IMR-90 (cell line): ENCODE measurements at regions of chr1 and their contacts with region 1.

Region 1: DNA sequence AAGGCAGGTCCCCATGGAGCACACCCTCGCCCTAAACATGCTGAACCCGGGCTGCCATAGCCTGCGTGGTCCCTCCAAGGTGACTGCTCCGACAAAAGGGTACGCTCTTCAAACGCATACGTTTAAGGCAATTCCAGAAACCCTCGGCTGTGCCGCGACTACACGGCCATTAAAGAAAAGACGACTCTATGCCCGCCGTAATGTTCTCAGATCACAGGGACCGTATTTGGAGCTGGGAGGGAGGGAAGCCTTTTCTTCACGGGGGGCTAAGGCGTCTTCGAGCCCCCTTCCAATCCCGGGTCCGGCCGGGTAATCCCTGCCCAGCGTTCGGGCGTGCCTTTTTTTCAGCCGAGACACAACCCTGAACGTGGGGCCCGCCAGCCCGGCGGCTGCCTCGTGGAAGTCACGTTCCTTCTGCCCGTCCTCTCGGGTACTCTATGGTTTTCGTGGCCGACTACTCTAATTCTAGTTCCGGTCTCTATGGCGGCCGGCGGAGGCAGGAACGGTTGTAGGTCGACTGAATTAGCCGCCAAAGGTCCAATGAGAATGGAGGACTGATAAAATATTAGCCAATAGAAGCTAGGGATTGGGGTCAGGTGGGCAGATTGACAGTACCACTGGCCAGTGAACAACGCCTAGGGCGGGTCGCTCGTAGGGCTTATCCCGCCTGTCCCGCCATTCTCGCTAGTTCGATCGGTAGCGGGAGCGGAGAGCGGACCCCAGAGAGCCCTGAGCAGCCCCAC is at the start of gene YBX1:
- DNase-seq: peak; percentile 99
- ATAC-seq: peak; percentile 90
- H3K4me3 ChIP-seq: peak within 1 kb of the TSS; percentile 84
- H3K27ac ChIP-seq: peak within 1 kb of the TSS; percentile 82
- H3K4me1 ChIP-seq: peaks cover 13% of the 10 kb centered on the region; the same call in 1 of the 2 replicates
- H3K27me3 ChIP-seq: no peaks in the 10 kb centered on the region
- CTCF ChIP-seq: no peak
- POLR2A ChIP-seq: peak; percentile 73
- RAD21 ChIP-seq: no peak
- total RNA-seq, gene YBX1: 843 and 1,307 TPM in 2 replicates

Region 2: GRCh38 chr1:42766741-42767509 is 85.0 kb after region 1 on chr1 and contains the starts of genes C1orf50 and P3H1:
- CTCF ChIA-PET with region 1: no interaction called
- POLR2A ChIA-PET with region 1: interaction called, 6 read pairs
- dilution Hi-C with region 1: no loop called
- in situ Hi-C with region 1: no loop called
- intact Hi-C with region 1: loop called (anchors 5 kb)
- DNase-seq: peak; percentile 98
- ATAC-seq: peak; percentile 92
- H3K4me3 ChIP-seq: peak within 1 kb of the TSS; percentile 77
- H3K27ac ChIP-seq: peak within 1 kb of the TSS; percentile 79
- H3K4me1 ChIP-seq: no peaks in the 10 kb centered on the region; the same call in 1 of the 2 replicates
- H3K27me3 ChIP-seq: no peaks in the 10 kb centered on the region
- CTCF ChIP-seq: no peak; the same call in 1 of the 2 replicates
- POLR2A ChIP-seq: peak; percentile 83
- RAD21 ChIP-seq: no peak
- total RNA-seq, gene C1orf50: 2.0 and 3.9 TPM in 2 replicates
- total RNA-seq, gene P3H1: 85.3 and 108 TPM in 2 replicates

Region 3: GRCh38 chr1:42846257-42847110 is 164.6 kb after region 1 on chr1 and contains the start of gene ZNF691:
- CTCF ChIA-PET with region 1: no interaction called
- POLR2A ChIA-PET with region 1: no interaction called
- dilution Hi-C with region 1: no loop called
- in situ Hi-C with region 1: no loop called
- intact Hi-C with region 1: loop called (anchors 10 kb)
- DNase-seq: peak; percentile 98
- ATAC-seq: peak; percentile 98
- H3K4me3 ChIP-seq: peak within 1 kb of the TSS; percentile 67
- H3K27ac ChIP-seq: peak within 1 kb of the TSS; percentile 60
- H3K4me1 ChIP-seq: peaks cover 6% of the 10 kb centered on the region
- H3K27me3 ChIP-seq: no peaks in the 10 kb centered on the region
- CTCF ChIP-seq: peak; percentile 42
- POLR2A ChIP-seq: peak; percentile 44; the same call in 1 of the 2 replicates
- RAD21 ChIP-seq: no peak
- total RNA-seq, gene ZNF691: 13.6 and 15.3 TPM in 2 replicates

Region 4: DNA sequence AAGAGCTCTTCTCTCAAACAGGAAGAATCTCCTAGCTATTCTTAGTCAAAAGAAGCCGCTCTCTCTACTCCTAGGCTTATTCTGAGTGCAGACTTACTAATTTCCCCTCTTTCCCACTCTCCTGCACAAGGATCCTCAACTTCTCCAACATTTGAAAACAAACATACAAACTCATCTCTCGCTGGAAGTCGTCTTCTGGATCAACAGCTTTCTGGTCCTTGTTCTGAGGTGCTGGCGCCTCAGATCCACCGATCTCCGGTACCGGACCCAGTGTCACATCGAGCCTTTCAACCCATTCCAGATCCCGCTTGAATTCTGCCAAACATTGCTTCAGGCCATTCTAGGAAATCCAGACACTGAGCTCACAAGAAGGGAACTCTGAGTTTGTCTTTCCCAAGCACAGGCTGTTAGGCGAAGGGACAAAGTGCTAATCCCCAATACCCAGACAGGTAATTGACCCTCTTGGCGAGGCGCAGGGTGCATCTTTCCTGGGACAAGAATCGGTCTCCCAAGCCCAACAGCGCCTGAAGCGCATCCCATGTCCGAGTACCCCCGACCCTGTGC is 489.5 kb after region 1 on chr1:
- CTCF ChIA-PET with region 1: no interaction called
- POLR2A ChIA-PET with region 1: no interaction called
- dilution Hi-C with region 1: no loop called
- in situ Hi-C with region 1: no loop called
- intact Hi-C with region 1: no loop called
- DNase-seq: peak; percentile 1
- ATAC-seq: no peak
- H3K4me3 ChIP-seq: peak overlapping the region; percentile 75
- H3K27ac ChIP-seq: peak overlapping the region; percentile 60
- H3K4me1 ChIP-seq: no peaks in the 10 kb centered on the region
- H3K27me3 ChIP-seq: peaks cover 5% of the 10 kb centered on the region
- CTCF ChIP-seq: no peak
- POLR2A ChIP-seq: no peak
- RAD21 ChIP-seq: 0 out of 2 replicates have a peak, but pooled peaks have one; percentile 1